ENCODE measurements at regions of chr2 and their contacts with region 1.

Region 1: GRCh38 chr2:211085056-211085680 is 528.8 kb downstream of the CPS1 start:
- DNase-seq: peak; percentile 13
- ATAC-seq: no peak
- H3K4me3 ChIP-seq: no peak overlapping the region
- H3K27ac ChIP-seq: no peak overlapping the region
- H3K4me1 ChIP-seq: no peaks in the 10 kb centered on the region
- H3K27me3 ChIP-seq: no peaks in the 10 kb centered on the region
- CTCF ChIP-seq: peak; percentile 69; the same call in 1 of the 2 replicates

Region 2: DNA sequence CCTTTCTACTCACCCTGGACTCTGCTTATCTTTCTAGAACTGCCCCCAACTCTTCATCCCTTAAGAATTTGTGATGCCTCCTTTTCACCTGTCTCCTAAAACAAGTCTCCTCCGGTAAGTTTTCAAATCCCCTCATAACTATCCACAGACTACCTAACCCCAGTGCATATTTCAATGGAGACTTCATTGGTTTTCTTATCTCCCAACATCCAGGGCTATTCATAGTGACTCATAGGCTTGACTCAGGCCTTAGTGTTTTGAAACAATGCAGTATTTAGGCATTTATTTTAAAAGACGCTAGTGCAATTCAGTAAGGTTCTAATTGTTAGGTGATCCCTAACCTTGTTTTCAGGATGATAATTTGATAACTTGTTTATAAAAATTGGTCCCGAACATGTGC is 129.6 kb before region 1 on chr2:
- CTCF ChIA-PET with region 1: no interaction called
- POLR2A ChIA-PET with region 1: no interaction called
- in situ Hi-C with region 1: no loop called
- intact Hi-C with region 1: no loop called
- DNase-seq: no peak
- ATAC-seq: peak; percentile 86
- H3K4me3 ChIP-seq: no peak overlapping the region
- H3K27ac ChIP-seq: no peak overlapping the region
- H3K4me1 ChIP-seq: no peaks in the 10 kb centered on the region
- H3K27me3 ChIP-seq: no peaks in the 10 kb centered on the region
- CTCF ChIP-seq: no peak

Region 3: DNA sequence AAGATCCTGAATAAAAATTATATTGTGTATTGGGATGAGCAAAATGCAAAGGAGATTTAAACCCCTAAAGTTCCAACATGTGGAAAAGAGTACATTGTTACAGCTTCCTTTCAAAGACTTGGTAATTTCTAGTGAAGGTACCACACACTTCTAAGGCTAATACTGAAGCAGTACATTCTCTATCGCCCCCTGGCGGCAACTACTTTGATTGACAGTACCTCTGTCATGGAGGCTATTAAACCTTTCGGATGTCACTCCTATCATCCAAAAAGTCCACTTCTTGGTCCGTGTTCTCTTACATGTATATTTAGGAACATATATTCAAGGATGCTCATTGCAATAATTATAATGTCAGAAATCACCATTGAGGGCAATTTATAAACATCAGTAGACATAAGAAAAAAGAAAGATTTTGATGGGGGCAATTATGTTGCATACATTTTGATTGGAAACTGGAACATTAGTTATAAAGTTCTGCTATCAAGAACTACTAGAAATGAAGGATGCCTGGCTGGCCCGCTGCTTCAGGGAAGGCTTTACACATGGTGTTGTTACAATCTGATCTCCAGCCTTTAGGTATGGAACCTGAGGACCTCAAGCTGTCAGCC is 72.8 kb after region 1 on chr2:
- CTCF ChIA-PET with region 1: no interaction called
- POLR2A ChIA-PET with region 1: no interaction called
- in situ Hi-C with region 1: no loop called
- intact Hi-C with region 1: loop called (anchors 5 kb)
- DNase-seq: peak; percentile 20
- ATAC-seq: peak; percentile 86; the same call in 1 of the 2 replicates
- H3K4me3 ChIP-seq: no peak overlapping the region
- H3K27ac ChIP-seq: no peak overlapping the region
- H3K4me1 ChIP-seq: no peaks in the 10 kb centered on the region
- H3K27me3 ChIP-seq: no peaks in the 10 kb centered on the region
- CTCF ChIP-seq: peak; percentile 78; the same call in 1 of the 2 replicates

Region 4: DNA sequence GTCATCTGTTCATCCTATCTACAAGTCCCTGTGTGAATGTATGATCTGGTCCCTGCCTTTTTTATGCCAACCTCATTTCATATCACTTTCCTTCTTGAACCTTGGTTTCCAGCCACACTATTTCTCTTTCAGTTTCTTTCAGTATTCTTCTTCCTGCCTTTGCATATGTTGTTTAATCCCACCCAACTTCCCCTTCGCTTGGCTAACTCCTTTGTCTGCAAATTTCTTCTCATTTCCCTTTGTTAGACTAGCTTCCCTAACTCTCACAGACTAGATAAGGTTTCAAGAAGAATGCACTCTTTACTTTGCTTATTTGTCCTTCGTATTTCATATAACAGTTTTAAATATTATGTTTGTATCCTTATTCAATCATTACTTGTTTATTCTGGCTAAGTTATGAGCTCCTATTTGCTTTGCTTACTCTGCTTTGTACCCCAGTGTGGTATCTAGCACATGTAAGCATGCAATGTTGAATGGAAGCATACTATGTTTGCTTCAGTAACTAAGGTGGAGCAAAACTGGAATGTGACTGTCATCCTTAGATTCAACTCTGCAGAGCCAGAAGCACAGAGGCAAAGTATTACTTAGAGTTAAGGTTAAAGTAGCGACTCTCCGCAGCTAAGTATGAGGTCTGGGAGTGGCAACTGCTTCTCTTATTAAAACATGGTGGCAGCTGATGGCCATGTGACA is 152.6 kb after region 1 on chr2:
- CTCF ChIA-PET with region 1: no interaction called
- POLR2A ChIA-PET with region 1: no interaction called
- in situ Hi-C with region 1: no loop called
- intact Hi-C with region 1: no loop called
- DNase-seq: no peak
- ATAC-seq: no peak
- H3K4me3 ChIP-seq: no peak overlapping the region
- H3K27ac ChIP-seq: no peak overlapping the region
- H3K4me1 ChIP-seq: no peaks in the 10 kb centered on the region
- H3K27me3 ChIP-seq: no peaks in the 10 kb centered on the region
- CTCF ChIP-seq: no peak

Region 5: GRCh38 chr2:211455216-211455841 is 370.2 kb after region 1 on chr2:
- CTCF ChIA-PET with region 1: no interaction called
- POLR2A ChIA-PET with region 1: no interaction called
- in situ Hi-C with region 1: no loop called
- intact Hi-C with region 1: loop called (anchors 10 kb)
- DNase-seq: peak; percentile 46
- ATAC-seq: peak; percentile 71; the same call in 1 of the 2 replicates
- H3K4me3 ChIP-seq: no peak overlapping the region
- H3K27ac ChIP-seq: no peak overlapping the region
- H3K4me1 ChIP-seq: no peaks in the 10 kb centered on the region
- H3K27me3 ChIP-seq: no peaks in the 10 kb centered on the region
- CTCF ChIP-seq: peak; percentile 88; the same call in 1 of the 2 replicates

Region 6: GRCh38 chr2:212117926-212118325 is 1032.8 kb after region 1 on chr2:
- CTCF ChIA-PET with region 1: no interaction called
- POLR2A ChIA-PET with region 1: no interaction called
- in situ Hi-C with region 1: no loop called
- intact Hi-C with region 1: no loop called
- DNase-seq: no peak
- ATAC-seq: no peak
- H3K4me3 ChIP-seq: no peak overlapping the region
- H3K27ac ChIP-seq: no peak overlapping the region
- H3K4me1 ChIP-seq: no peaks in the 10 kb centered on the region
- H3K27me3 ChIP-seq: no peaks in the 10 kb centered on the region
- CTCF ChIP-seq: no peak